ENCODE measurements at regions of chr19 and their contacts with region 1.

Region 1: DNA sequence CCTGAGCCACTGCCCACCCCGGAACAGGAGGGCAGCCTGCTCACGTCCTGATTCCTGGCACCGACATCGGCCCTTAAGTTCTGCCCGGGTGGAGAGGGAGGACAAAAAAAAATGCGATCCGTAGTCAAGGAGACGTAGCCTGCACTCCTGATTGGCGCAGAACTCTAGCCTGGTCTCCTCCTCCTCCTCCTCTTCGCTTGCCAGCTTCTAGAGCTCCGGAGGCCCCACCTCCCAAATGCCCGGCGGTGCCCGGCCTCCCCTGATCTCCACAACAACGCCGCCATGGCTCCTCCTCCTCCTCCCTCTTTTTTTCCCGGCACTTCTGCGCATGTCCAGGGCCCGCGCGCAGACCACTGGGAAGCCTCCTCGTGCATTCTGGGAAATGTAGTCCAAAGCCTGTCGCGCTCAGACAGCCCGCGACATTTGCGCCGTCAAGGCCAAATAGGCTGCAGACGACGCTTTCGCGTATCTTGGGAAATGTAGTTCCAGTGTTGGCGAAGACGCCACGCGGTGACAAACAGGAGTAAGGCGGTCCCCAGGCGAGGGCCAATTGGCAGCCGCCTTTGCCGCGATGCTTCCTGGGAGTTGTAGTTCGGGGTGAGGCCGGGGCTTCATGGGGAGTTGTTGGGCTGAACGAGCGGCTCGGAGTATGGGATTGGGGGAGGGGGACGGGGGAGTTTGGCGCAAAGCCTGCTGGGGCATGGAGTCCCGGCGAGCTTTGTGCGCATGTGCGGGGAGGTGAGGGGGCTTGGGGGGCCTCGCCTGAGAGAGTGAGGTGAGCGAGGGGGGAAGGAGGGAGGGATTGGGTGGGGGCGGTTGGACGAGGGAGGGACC is at the start of gene ZNF444:
- DNase-seq: peak; percentile 99
- ATAC-seq: peak; percentile 96
- H3K4me3 ChIP-seq: peak within 1 kb of the TSS; percentile 50 to 66
- H3K27ac ChIP-seq: peak within 1 kb of the TSS in 1 of 2 donors; percentile 93
- H3K4me1 ChIP-seq: no peaks in the 10 kb centered on the region
- H3K27me3 ChIP-seq: no peaks in the 10 kb centered on the region
- total RNA-seq, gene ZNF444: 23.0 to 26.1 TPM

Region 2: DNA sequence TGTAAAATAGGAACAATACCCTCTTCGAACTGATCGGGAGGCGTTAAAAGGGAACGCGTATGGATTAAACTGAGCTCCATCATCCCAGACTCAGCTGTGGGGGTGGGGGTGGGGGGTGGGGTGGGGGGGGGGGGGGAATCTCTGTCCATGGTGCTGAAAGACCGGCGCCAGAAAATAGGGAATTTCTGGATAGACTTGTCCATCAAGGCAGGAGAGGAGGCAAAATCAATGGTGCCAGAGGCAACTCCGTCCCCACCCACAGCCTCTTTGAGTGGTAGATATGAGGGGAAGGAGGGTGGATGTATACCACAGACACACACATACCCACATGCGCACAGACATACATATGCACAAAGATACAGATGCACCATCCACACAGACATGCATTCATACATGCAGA is 57.1 kb before region 1 on chr19:
- intact Hi-C with region 1: loop called in 1 of 2 experiments (anchors 2 kb)
- DNase-seq: no peak
- ATAC-seq: no peak
- H3K4me3 ChIP-seq: no peak overlapping the region
- H3K27ac ChIP-seq: no peak overlapping the region
- H3K4me1 ChIP-seq: no peaks in the 10 kb centered on the region
- H3K27me3 ChIP-seq: no peaks in the 10 kb centered on the region

Region 3: GRCh38 chr19:56105090-56105701 is 35.6 kb before region 1 on chr19:
- intact Hi-C with region 1: loop called in 1 of 2 experiments (anchors 5 kb)
- DNase-seq: peak; percentile 80 to 91
- ATAC-seq: peak; percentile 87
- H3K4me3 ChIP-seq: no peak overlapping the region
- H3K27ac ChIP-seq: peak overlapping the region in 1 of 2 donors; percentile 28
- H3K4me1 ChIP-seq: no peaks in the 10 kb centered on the region
- H3K27me3 ChIP-seq: no peaks in the 10 kb centered on the region

Region 4: GRCh38 chr19:56121180-56122167 is 19.3 kb before region 1 on chr19 and contains the start of gene ZNF787:
- intact Hi-C with region 1: loop called in 1 of 2 experiments (anchors 1 kb)
- DNase-seq: peak; percentile 99
- ATAC-seq: peak; percentile 98
- H3K4me3 ChIP-seq: peak within 1 kb of the TSS; percentile 69 to 90
- H3K27ac ChIP-seq: peak within 1 kb of the TSS in 1 of 2 donors; percentile 71
- H3K4me1 ChIP-seq: no peaks in the 10 kb centered on the region
- H3K27me3 ChIP-seq: no peaks in the 10 kb centered on the region
- total RNA-seq, gene ZNF787: 23.9 to 25.5 TPM

Region 5: GRCh38 chr19:56314562-56315077 is 173.8 kb after region 1 on chr19 and contains the start of gene ZSCAN5A:
- intact Hi-C with region 1: loop called in 1 of 2 experiments (anchors 10 kb)
- DNase-seq: peak; percentile 99
- ATAC-seq: peak; percentile 96
- H3K4me3 ChIP-seq: peak within 1 kb of the TSS; percentile 64 to 67
- H3K27ac ChIP-seq: peak within 1 kb of the TSS in 1 of 2 donors; percentile 98
- H3K4me1 ChIP-seq: no peaks in the 10 kb centered on the region
- H3K27me3 ChIP-seq: no peaks in the 10 kb centered on the region
- total RNA-seq, gene ZSCAN5A: 10.2 to 13.8 TPM